Spleen (tissue), 13 donors: ENCODE measurements at regions of chr1 and their contacts with region 1.

Region 1: GRCh38 chr1:183480971-183481441 is 8.7 kb downstream of the SMG7 start:
- DNase-seq: no peak
- H3K4me3 ChIP-seq: no peak overlapping the region
- H3K27ac ChIP-seq: peak overlapping the region in 5 of 8 donors; percentile 11 to 59 (median 44)
- H3K4me1 ChIP-seq: peaks cover 35 to 100% (median 71%) of the 10 kb centered on the region in 6 donors
- H3K27me3 ChIP-seq: no peaks in the 10 kb centered on the region
- CTCF ChIP-seq: no peak
- POLR2A ChIP-seq: no peak

Region 2: DNA sequence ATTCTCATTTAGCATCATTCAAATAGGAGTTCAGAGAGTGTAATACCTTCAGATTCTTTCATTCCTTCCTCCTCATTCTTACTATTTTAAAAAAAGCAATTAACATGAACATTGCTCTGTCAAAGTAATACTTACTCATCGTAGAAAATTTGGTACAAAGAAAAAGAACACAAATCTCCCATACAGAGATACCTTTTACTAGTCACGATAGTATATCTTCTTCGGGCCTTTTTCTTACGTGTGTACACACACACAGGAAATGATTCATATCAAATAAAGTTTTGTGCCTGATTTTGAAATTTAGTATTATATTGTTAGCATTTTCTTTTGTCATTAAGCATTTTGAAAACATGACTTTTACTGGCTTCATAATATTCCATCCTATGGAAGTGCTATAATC is 56.4 kb after region 1 on chr1:
- intact Hi-C with region 1: loop called (anchors 10 kb)
- DNase-seq: no peak
- H3K4me3 ChIP-seq: no peak overlapping the region
- H3K27ac ChIP-seq: no peak overlapping the region
- H3K4me1 ChIP-seq: no peaks in the 10 kb centered on the region
- H3K27me3 ChIP-seq: no peaks in the 10 kb centered on the region
- CTCF ChIP-seq: no peak
- POLR2A ChIP-seq: no peak